Caco-2 (cell line): ENCODE measurements at regions of chr6 and their contacts with region 1.

Region 1: GRCh38 chr6:25278914-25279747 is at the start of gene CARMIL1:
- DNase-seq: peak; percentile 91 to 93
- H3K4me3 ChIP-seq: peak within 1 kb of the TSS; percentile 95
- H3K4me3 Mint-ChIP-seq: peak within 1 kb of the TSS; percentile 95
- H3K27ac Mint-ChIP-seq: peak within 1 kb of the TSS; percentile 87
- H3K4me1 ChIP-seq: peaks cover 8% of the 10 kb centered on the region
- H3K4me1 Mint-ChIP-seq: peaks cover 33% of the 10 kb centered on the region
- H3K27me3 ChIP-seq: no peaks in the 10 kb centered on the region
- H3K27me3 Mint-ChIP-seq: no peaks in the 10 kb centered on the region
- CTCF ChIP-seq: peak; percentile 53 to 88
- total RNA-seq, gene CARMIL1: 25.9 and 26.5 TPM in 2 replicates

Region 2: DNA sequence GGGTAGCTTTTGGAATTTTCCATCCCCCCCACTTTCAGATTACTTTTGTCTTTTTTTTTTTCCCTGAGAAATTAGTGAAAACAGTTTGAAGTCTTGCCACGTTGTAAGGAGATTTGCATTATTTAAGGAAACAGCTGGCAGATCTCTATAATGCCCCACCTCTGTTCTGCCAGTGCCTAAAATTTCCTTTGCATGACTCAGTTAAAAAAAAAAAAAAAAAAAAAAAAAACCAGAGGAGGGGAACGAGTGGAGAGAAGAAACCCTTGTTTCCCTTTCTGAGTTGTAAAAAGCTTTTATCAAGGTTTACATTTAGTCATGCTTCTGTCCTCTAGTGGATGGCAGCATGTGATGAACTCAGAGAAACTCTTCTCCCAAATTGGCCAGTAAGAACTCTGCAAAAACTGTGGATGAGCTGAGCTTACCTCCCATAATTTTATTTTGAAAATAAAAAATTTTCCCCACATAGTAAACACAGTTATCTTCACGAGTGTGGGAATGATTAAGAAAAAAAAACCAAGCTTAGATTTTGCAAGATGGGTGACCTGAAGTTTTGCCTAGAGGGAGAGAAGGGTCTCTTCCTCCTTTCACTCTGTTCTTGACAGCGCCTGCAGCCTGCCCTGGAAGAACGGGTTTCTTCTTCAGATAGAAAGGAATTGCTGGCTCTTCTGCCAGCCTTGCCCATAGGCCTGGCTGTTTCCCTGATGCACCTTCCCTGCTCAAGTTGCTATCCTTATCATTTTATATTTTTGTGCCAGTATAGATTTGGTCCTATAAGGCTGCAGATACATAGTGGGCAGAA is 33.8 kb after region 1 on chr6:
- CTCF ChIA-PET with region 1: interaction called, 12 read pairs
- POLR2A ChIA-PET with region 1: interaction called, 4 read pairs
- intact Hi-C with region 1: loop called (anchors 2 kb)
- DNase-seq: no peak
- H3K4me3 ChIP-seq: no peak overlapping the region
- H3K4me3 Mint-ChIP-seq: peak overlapping the region; percentile 64
- H3K27ac Mint-ChIP-seq: peak overlapping the region; percentile 80
- H3K4me1 ChIP-seq: peaks cover 35% of the 10 kb centered on the region
- H3K4me1 Mint-ChIP-seq: peaks cover 40% of the 10 kb centered on the region
- H3K27me3 ChIP-seq: no peaks in the 10 kb centered on the region
- H3K27me3 Mint-ChIP-seq: no peaks in the 10 kb centered on the region
- CTCF ChIP-seq: peak in 1 of 2 experiments; percentile 27

Region 3: GRCh38 chr6:25413207-25413905 is 134.2 kb after region 1 on chr6:
- CTCF ChIA-PET with region 1: interaction called, 6 read pairs
- POLR2A ChIA-PET with region 1: no interaction called
- intact Hi-C with region 1: loop called (anchors 2 kb)
- DNase-seq: no peak
- H3K4me3 ChIP-seq: no peak overlapping the region
- H3K4me3 Mint-ChIP-seq: no peak overlapping the region
- H3K27ac Mint-ChIP-seq: no peak overlapping the region
- H3K4me1 ChIP-seq: peaks cover 36% of the 10 kb centered on the region
- H3K4me1 Mint-ChIP-seq: peaks cover 31% of the 10 kb centered on the region
- H3K27me3 ChIP-seq: no peaks in the 10 kb centered on the region
- H3K27me3 Mint-ChIP-seq: no peaks in the 10 kb centered on the region
- CTCF ChIP-seq: no peak

Region 4: GRCh38 chr6:25490018-25490801 is 211.1 kb after region 1 on chr6:
- CTCF ChIA-PET with region 1: interaction called, 38 read pairs
- POLR2A ChIA-PET with region 1: interaction called, 10 read pairs
- intact Hi-C with region 1: loop called (anchors 1 kb)
- DNase-seq: peak; percentile 87 to 90
- H3K4me3 ChIP-seq: no peak overlapping the region
- H3K4me3 Mint-ChIP-seq: no peak overlapping the region
- H3K27ac Mint-ChIP-seq: peak overlapping the region; percentile 63
- H3K4me1 ChIP-seq: peaks cover 11% of the 10 kb centered on the region
- H3K4me1 Mint-ChIP-seq: peaks cover 7% of the 10 kb centered on the region
- H3K27me3 ChIP-seq: no peaks in the 10 kb centered on the region
- H3K27me3 Mint-ChIP-seq: no peaks in the 10 kb centered on the region
- CTCF ChIP-seq: peak; percentile 84 to 86